ENCODE measurements at regions of chr19 and their contacts with region 1.

Region 1: DNA sequence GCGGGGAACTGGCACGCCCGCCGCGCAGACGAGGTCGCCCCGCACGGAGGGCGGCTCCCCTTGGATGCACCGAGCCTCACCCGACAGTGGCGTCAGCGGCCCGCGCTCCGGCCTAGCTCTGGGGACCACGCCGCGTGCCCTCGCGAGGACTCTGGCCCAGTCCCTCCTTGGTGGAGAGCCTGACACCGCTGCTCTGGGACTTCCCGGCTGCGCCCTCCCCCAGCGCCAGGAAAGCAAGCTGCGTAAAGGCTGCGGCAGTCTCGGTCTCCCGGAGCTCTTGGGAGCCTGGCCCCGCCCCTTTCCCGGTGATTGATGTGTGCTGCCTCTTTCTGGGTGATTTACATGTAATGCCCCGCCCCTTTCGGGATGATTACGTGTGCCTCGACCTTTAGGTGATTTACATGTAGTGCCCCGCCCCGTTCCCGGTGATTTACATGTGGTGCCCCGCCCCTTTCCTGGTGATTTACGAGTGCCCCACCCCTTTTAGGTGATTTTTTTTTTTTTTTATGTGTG is at the start of gene LENG9:
- DNase-seq: no peak
- ATAC-seq: peak; percentile 66
- H3K4me3 ChIP-seq: peak within 1 kb of the TSS; percentile 76
- H3K27ac ChIP-seq: peak within 1 kb of the TSS; percentile 81
- H3K4me1 ChIP-seq: peaks cover 12% of the 10 kb centered on the region
- H3K27me3 ChIP-seq: no peaks in the 10 kb centered on the region
- CTCF ChIP-seq: no peak
- EP300 ChIP-seq: no peak
- POLR2A ChIP-seq: peak; percentile 68
- RAD21 ChIP-seq: no peak
- polyA plus RNA-seq, gene LENG9: 0.18 to 1.7 TPM

Region 2: GRCh38 chr19:54448774-54449700 is 14.6 kb before region 1 on chr19 and contains the start of gene LENG8:
- CTCF ChIA-PET with region 1: interaction called, 6 read pairs
- POLR2A ChIA-PET with region 1: interaction called, 16 read pairs
- RAD21 ChIA-PET with region 1: interaction called, 12 read pairs
- SMC1A ChIA-PET with region 1: interaction called, 5 read pairs
- in situ Hi-C with region 1: no loop called
- intact Hi-C with region 1: loop called (anchors 1 kb)
- DNase-seq: peak; percentile 95
- ATAC-seq: peak; percentile 92
- H3K4me3 ChIP-seq: peak within 1 kb of the TSS; percentile 90
- H3K27ac ChIP-seq: peak within 1 kb of the TSS; percentile 93
- H3K4me1 ChIP-seq: no peaks in the 10 kb centered on the region
- H3K27me3 ChIP-seq: no peaks in the 10 kb centered on the region
- CTCF ChIP-seq: no peak
- EP300 ChIP-seq: no peak
- POLR2A ChIP-seq: peak; percentile 96
- RAD21 ChIP-seq: no peak
- polyA plus RNA-seq, gene LENG8: 2.3 to 2.5 TPM

Region 3: DNA sequence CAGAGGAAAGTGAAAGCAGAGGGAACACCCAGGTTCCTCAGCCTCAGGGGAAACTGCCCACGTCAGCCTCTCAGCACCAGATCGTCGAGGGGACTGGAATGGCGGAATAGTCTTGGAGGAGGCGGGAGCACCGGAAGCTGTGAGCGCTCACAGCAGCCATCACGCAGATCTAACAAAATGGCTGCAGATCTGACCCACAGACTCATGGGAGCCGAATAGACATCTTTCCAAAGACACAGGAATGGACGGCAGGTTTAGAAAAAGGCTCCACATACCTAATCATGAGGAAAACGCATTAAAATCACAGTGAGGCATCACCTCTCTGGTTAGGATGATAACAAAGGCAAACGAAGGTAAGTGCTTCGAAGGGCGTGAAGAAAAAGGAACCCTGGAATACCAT is 98.3 kb after region 1 on chr19:
- CTCF ChIA-PET with region 1: no interaction called
- POLR2A ChIA-PET with region 1: no interaction called
- RAD21 ChIA-PET with region 1: no interaction called
- SMC1A ChIA-PET with region 1: no interaction called
- in situ Hi-C with region 1: no loop called
- intact Hi-C with region 1: no loop called
- DNase-seq: no peak
- ATAC-seq: no peak
- H3K4me3 ChIP-seq: no peak overlapping the region
- H3K27ac ChIP-seq: no peak overlapping the region
- H3K4me1 ChIP-seq: no peaks in the 10 kb centered on the region
- H3K27me3 ChIP-seq: no peaks in the 10 kb centered on the region; a peak in 2 of 4 replicates
- CTCF ChIP-seq: no peak
- EP300 ChIP-seq: no peak
- POLR2A ChIP-seq: no peak
- RAD21 ChIP-seq: no peak

Measured in GM12878 (cell line).